ENCODE measurements at regions of chr2 and their contacts with region 1.

Region 1: DNA sequence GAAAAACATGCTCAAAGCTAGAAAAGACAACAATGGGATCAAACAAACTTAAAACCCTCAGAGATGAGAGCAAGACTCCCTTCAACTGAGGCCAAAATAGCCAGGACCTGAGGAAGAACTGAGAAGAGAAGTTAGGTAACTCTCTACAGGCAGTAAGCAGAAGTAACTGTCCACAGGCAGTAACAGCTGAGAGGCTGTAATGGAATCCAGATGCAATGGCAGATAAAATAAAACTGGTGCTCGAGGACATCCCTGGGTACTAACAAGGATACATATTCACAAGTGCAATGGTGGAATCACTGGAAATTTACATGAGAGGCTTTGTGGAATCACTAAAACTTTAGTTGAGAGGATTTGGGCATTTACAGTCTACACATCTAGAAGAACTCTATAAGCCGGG is 30.4 kb upstream of the C2orf66 start:
- DNase-seq: no peak
- ATAC-seq: no peak
- H3K4me3 Mint-ChIP-seq: no peak overlapping the region
- H3K27ac Mint-ChIP-seq: no peak overlapping the region
- H3K4me1 Mint-ChIP-seq: no peaks in the 10 kb centered on the region
- H3K27me3 Mint-ChIP-seq: no peaks in the 10 kb centered on the region

Region 2: DNA sequence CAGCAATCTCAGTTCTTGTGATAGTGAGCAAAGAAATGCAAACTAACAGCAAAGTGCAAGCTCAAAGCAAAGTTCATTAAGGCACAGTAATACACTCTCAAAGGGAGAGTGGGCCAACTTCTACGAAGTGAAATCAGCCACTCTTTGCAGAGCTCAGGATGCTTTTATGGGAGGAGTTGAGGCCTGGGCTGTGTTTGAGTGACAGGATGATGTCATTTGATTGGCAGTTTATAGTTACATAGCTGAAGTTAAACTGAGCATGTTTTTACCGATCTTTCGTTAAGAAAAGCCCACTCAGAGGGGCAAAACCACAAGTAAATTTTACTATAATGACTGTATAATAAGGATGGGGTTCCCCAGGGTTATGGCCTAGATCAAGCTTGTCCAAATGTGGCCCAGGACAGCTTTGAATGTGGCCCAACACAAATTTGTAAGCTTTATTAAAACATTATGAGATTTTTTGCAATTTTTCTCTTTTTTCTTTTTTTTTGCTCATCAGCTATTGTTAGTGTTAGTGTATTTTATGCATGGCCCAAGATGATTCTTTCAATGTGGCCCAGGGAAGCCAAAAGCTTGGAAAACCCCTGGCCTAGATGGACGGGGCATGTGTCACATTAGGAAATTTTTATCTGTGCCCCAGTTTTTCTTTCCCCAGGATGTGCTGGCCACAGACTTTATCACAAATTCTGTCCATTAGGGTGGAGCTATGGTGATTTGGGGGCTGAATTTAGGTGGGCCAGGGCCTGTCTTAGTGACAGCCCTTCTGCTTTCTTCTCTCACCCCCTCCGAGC is 762.6 kb before region 1 on chr2:
- CTCF ChIA-PET with region 1: no interaction called
- POLR2A ChIA-PET with region 1: no interaction called
- intact Hi-C with region 1: no loop called
- DNase-seq: no peak
- ATAC-seq: no peak
- H3K4me3 Mint-ChIP-seq: no peak overlapping the region
- H3K27ac Mint-ChIP-seq: no peak overlapping the region
- H3K4me1 Mint-ChIP-seq: peaks cover 14% of the 10 kb centered on the region
- H3K27me3 Mint-ChIP-seq: no peaks in the 10 kb centered on the region

Region 3: DNA sequence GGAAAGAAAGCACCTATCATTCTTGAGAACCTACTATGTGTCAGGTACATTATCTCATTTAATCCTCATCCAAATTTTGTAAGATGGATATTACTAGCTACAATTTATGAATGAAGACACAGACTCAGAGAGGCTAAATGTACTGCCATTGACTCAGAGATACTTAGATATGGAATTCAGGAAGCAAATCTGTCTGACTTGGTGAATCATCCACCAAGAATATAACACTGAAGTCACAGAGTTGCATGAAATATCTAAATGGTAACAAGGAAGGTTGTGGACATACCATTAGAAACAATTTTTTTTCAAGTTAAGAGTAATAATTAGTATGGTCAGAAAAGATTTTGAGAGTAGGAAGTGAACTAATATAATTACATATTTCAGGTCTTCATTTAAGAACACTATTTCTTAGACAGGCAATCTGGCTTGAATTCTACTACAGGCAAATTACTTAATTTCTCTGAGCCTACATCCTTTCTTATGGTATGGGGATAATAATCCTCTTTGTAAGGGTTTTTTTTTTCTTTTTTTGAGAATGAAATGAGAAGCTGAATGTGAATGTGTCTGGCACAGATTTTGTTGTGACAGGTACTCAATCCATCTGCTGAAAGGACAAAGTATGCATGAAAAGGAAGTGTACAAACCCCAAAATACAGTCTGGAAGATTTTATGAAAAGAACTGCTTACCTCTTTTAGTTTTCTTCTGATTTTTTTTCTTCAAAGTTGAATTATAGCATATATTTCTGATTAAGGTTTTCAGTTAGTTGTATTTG is 15.6 kb before region 1 on chr2:
- CTCF ChIA-PET with region 1: interaction called, 3 read pairs
- POLR2A ChIA-PET with region 1: interaction called, 14 read pairs
- intact Hi-C with region 1: no loop called
- DNase-seq: no peak
- ATAC-seq: no peak
- H3K4me3 Mint-ChIP-seq: no peak overlapping the region
- H3K27ac Mint-ChIP-seq: no peak overlapping the region
- H3K4me1 Mint-ChIP-seq: peaks cover 3% of the 10 kb centered on the region
- H3K27me3 Mint-ChIP-seq: peaks cover 14% of the 10 kb centered on the region

Measured in activated CD4-positive, alpha-beta T cell treated with anti-CD3 and anti-CD28 coated beads for 36 hours (primary cell).